Right ventricle myocardium inferior (tissue), 1 donor: ENCODE measurements at regions of chr5 and their contacts with region 1.

Region 1: GRCh38 chr5:138035605-138036537 is 3.0 kb upstream of the FAM13B start:
- DNase-seq: no peak
- ATAC-seq: peak; percentile 63

Region 2: DNA sequence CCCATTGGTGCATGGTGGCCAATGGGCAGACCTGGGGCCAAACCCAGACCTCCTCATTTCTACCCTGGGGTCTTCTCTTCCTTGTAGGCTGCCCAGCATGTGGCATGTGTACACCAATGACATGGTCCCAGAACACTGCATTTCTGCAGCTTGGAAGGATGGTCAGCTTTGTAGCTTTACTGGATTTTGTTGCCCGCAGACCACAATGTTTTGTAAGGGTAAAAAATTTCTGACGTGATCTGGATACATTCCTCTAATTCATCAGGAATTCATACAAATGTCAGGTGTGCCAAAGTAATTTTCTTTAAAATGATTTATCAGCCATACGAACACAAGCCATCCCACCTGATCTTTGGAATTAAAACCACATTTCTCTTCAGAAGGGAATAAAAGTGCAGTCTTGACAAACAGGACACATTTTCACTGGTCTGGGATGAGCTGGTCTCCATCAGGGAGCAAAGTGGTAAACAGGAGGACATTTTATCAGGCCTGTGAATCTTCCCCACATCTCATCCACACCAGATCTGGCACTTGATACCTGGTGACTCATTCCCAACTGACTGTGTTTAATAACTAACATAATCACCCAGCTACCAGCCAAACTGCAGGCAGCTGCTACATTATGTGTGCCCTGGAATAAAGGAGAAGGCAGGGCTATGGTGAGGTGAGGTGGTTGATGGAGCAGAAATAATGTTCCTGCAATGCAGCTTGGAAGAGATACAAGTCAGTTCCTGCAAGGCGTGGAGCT is 640.7 kb before region 1 on chr5:
- intact Hi-C with region 1: no loop called
- DNase-seq: no peak
- ATAC-seq: no peak

Region 3: DNA sequence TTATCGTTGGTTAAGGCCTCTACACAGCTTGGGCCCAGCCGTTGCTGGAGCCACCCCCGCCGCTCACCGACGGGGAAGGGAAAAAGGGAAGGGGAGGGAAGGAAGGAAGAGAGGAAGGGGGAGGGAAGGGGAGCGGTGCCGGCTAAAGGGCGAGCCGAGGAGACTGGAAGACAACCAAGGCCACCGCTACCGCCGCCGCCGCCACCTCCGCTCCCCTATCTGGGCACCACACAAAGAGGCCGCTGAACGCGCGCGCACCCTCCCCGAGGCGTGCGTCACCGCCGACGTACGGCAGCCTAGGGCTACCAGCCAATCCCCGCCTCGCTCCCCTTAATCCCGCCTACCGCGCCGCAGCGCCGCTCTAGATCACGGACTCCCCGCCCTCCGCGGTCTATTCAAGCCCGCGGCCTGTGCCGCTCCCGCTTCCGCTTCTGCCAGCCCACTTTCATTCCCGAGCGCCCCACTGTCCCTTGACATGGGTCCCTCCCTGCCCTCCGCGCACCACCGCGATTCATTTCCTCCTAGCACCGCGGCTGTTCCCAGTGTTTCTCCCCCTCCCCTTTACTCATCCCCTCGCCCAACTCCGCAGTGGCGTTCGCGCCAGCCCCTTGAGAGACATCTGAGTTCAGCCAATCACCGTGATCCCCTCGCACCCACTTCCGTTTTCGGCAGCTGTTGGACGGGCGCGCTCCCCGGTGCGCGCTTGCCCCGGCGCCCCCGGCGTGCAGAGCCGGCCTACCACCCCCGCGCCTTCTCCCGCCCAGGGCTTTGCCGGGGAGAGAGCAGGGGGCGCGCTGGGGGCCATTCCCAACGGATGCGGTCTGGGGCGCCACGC is 281.5 kb before region 1 on chr5 and contains the start of gene HNRNPA0:
- intact Hi-C with region 1: loop called (anchors 5 kb)
- DNase-seq: peak; percentile 99
- ATAC-seq: peak; percentile 96
- total RNA-seq, gene HNRNPA0: 12.1 TPM

Region 4: DNA sequence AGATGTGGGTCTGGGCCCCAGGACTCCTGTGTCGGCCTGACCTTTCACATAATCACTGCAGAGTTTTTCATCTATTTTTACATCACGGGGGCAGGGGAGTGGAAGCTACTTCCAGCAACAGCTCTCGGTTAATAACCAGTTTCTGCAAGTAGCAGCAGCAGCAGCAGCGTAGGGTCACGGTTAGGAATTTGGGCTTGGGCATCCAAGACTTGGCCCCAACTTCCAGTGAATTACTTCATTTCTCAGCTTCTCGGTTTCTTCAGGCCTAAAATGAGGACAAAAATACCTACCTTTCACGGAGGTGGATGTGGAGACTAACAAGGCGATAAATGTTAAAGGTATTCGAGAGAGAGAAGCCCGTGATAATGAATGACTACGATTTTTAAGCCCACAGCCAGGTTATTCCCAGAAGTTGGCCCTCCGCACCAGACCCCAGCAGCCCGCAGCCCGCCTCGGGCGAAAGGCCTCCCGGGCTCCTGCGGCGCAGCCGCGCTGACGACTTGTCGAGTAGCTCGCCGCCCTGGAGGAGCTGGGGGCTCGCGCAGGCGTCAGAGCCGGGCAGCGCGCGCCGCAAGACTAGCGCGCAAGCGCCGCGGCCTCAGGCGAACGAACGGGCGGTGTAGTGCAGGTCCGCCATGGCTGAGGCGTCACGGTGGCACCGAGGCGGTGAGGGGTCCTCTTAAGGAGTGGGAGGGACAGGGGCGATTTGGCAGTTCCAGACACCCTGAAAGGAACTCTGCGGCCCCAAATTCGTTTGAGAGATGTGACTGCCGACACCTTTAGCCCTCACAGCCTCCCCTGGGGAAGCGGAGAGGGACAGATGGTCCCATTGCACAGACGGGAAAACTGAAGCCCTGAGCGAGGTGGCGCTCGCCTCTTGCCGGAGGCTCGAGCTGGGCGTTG is 146.8 kb before region 1 on chr5 and contains the start of gene PKD2L2:
- intact Hi-C with region 1: loop called (anchors 5 kb)
- DNase-seq: peak; percentile 94
- ATAC-seq: peak; percentile 98
- total RNA-seq, gene PKD2L2: 0.81 TPM

Region 5: GRCh38 chr5:137954131-137954879 is 81.6 kb before region 1 on chr5:
- intact Hi-C with region 1: no loop called
- DNase-seq: no peak
- ATAC-seq: peak; percentile 94

Region 6: GRCh38 chr5:138069068-138069600 is 33.3 kb after region 1 on chr5:
- intact Hi-C with region 1: loop called (anchors 1 kb)
- DNase-seq: no peak
- ATAC-seq: no peak

Region 7: DNA sequence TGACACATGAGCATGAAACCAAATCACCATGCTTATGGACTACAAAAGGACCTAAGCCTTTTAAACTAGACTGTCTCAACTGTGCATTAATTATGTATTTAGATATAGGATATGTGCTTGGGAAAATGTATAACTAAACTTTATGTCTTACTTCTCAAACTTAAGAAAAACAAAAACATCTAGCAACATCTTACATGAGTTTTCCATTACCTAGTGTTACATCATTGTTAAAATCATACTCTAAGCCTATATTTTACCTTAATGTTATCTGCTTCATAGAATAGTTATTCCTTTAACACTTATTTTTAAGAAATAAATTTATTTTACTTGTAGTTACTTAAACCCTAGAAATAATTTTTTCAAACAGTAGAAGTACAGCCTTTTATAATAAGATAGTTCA is 79.4 kb after region 1 on chr5:
- intact Hi-C with region 1: no loop called
- DNase-seq: no peak
- ATAC-seq: no peak

Region 8: GRCh38 chr5:138132543-138132942 is 96.7 kb after region 1 on chr5:
- intact Hi-C with region 1: loop called (anchors 2 kb)
- DNase-seq: no peak
- ATAC-seq: no peak